ENCODE measurements at regions of chr4 and their contacts with region 1.

Region 1: DNA sequence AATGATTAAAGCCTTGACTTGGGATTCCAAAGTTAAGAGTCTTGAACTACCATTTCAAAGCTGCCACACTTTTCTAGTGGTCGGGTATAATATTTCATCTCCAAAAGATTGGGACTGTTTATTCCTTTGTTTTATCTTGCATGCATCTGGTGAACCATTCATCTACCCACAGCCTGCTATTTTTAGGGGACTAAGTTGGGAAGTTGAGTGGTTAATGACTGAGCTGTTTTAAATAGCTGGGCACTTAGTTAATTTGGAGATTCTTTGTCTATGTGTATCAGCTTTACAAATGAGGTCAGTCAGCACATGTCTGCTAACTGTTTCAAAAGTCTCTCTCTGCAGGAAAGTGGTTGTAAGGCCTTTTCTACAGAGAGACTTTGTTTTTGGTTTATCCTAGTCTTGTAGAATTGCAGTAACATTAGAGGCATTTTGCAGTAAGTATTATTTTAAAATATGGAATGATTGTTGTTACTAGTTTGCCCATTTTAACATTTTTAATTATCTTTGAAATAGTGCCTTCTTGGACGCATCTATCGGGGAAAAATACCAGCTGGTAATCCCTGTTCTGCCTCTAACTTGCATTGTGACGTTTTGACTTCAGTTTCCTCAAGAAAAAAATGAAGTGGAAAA is 8.2 kb downstream of the BMP2K start:
- DNase-seq: no peak
- ATAC-seq: no peak
- H3K4me3 ChIP-seq: no peak overlapping the region
- H3K4me3 Mint-ChIP-seq: no peak overlapping the region
- H3K27ac ChIP-seq: peak overlapping the region in 1 of 2 donors; percentile 30
- H3K27ac Mint-ChIP-seq: peak overlapping the region; percentile 22
- H3K4me1 ChIP-seq: peaks cover 60 to 83% of the 10 kb centered on the region in 2 donors
- H3K4me1 Mint-ChIP-seq: peaks cover 45% of the 10 kb centered on the region
- H3K27me3 ChIP-seq: no peaks in the 10 kb centered on the region
- H3K27me3 Mint-ChIP-seq: no peaks in the 10 kb centered on the region
- CTCF ChIP-seq: no peak

Region 2: DNA sequence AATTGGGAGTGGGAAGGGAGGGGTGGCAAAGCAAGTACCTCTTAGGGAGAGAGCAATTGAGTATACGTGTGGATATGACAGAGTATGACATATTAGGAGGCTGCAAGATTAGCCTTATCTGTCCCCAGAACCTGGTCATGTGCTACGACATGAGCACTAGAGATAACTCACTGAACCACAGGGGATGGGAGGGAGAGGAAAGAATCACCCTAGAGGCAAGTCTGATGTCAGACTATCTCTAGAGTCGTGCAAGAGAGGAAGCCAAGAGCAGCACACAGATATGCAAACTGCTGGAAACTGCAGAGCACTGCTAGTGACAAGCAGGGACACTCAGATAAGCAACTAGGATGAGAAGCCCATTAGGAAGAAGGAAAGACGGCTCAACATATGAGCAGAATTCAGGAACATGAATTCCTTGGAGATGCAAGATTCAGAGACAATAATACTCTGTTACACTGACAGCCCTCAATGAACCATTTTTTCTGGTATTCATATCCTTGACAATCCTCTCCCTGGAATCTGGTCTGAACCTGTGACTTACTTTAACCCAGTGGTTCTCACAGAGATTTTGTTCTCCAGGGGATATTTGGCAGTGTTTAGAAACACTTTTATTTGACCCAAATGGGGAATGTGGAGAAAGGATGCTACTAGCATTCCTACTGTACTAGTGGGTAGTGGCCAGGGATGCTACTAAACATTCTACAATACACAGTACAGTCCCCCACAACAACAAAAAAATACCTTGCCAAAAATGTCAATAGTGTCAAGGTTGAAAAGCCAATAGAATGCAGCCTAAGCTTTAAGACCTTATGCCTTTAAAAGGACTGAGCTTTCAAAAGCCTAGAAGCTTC is 92.2 kb before region 1 on chr4:
- CTCF ChIA-PET with region 1: no interaction called
- POLR2A ChIA-PET with region 1: no interaction called
- intact Hi-C with region 1: no loop called
- DNase-seq: peak; percentile 60
- ATAC-seq: peak; percentile 98
- H3K4me3 ChIP-seq: no peak overlapping the region
- H3K4me3 Mint-ChIP-seq: peak overlapping the region; percentile 5
- H3K27ac ChIP-seq: peak overlapping the region in 1 of 2 donors; percentile 26
- H3K27ac Mint-ChIP-seq: peak overlapping the region; percentile 3
- H3K4me1 ChIP-seq: peaks cover 17 to 19% of the 10 kb centered on the region in 2 donors
- H3K4me1 Mint-ChIP-seq: peaks cover 32% of the 10 kb centered on the region
- H3K27me3 ChIP-seq: no peaks in the 10 kb centered on the region
- H3K27me3 Mint-ChIP-seq: no peaks in the 10 kb centered on the region
- CTCF ChIP-seq: no peak

Region 3: GRCh38 chr4:78799551-78800495 is 15.5 kb after region 1 on chr4:
- CTCF ChIA-PET with region 1: interaction called, 7 read pairs
- POLR2A ChIA-PET with region 1: no interaction called
- intact Hi-C with region 1: loop called (anchors 2 kb)
- DNase-seq: no peak
- ATAC-seq: peak; percentile 24
- H3K4me3 ChIP-seq: no peak overlapping the region
- H3K4me3 Mint-ChIP-seq: peak overlapping the region; percentile 33
- H3K27ac ChIP-seq: peak overlapping the region in 1 of 2 donors; percentile 71
- H3K27ac Mint-ChIP-seq: peak overlapping the region; percentile 7
- H3K4me1 ChIP-seq: peaks cover 24 to 56% of the 10 kb centered on the region in 2 donors
- H3K4me1 Mint-ChIP-seq: peaks cover 68% of the 10 kb centered on the region
- H3K27me3 ChIP-seq: no peaks in the 10 kb centered on the region
- H3K27me3 Mint-ChIP-seq: no peaks in the 10 kb centered on the region
- CTCF ChIP-seq: no peak

Region 4: GRCh38 chr4:78818530-78819079 is 34.3 kb after region 1 on chr4:
- CTCF ChIA-PET with region 1: no interaction called
- POLR2A ChIA-PET with region 1: no interaction called
- intact Hi-C with region 1: loop called (anchors 5 kb)
- DNase-seq: no peak
- ATAC-seq: no peak
- H3K4me3 ChIP-seq: no peak overlapping the region
- H3K4me3 Mint-ChIP-seq: no peak overlapping the region
- H3K27ac ChIP-seq: no peak overlapping the region
- H3K27ac Mint-ChIP-seq: no peak overlapping the region
- H3K4me1 ChIP-seq: peaks cover 0 to 8% of the 10 kb centered on the region in 2 donors
- H3K4me1 Mint-ChIP-seq: peaks cover 65% of the 10 kb centered on the region
- H3K27me3 ChIP-seq: no peaks in the 10 kb centered on the region
- H3K27me3 Mint-ChIP-seq: no peaks in the 10 kb centered on the region
- CTCF ChIP-seq: no peak

Measured in B cell (primary cell).